H1 (cell line): ENCODE measurements at regions of chr5 and their contacts with region 1.

Region 1: GRCh38 chr5:10695055-10695649 is 65.9 kb downstream of the DAP start:
- DNase-seq: peak in 1 of 2 experiments; percentile 76
- H3K4me3 ChIP-seq: no peak overlapping the region
- H3K27ac ChIP-seq: no peak overlapping the region
- H3K4me1 ChIP-seq: peaks cover 0 to 3% (median 2%) of the 10 kb centered on the region in 4 experiments; a peak in 3 of 7 replicates
- H3K27me3 ChIP-seq: no peaks in the 10 kb centered on the region
- CTCF ChIP-seq: peak; percentile 85 to 88 (median 88)
- EP300 ChIP-seq: no peak
- POLR2A ChIP-seq: no peak
- RAD21 ChIP-seq: peak; percentile 92 to 94

Region 2: GRCh38 chr5:10756549-10756948 is 61.4 kb after region 1 on chr5:
- CTCF ChIA-PET with region 1: interaction called, 11 read pairs
- POLR2A ChIA-PET with region 1: no interaction called
- DNase-seq: no peak
- H3K4me3 ChIP-seq: no peak overlapping the region
- H3K27ac ChIP-seq: no peak overlapping the region
- H3K4me1 ChIP-seq: peaks cover 2 to 5% (median 3%) of the 10 kb centered on the region in 4 experiments; a peak in 4 of 7 replicates
- H3K27me3 ChIP-seq: no peaks in the 10 kb centered on the region
- CTCF ChIP-seq: no peak
- EP300 ChIP-seq: no peak
- POLR2A ChIP-seq: no peak
- RAD21 ChIP-seq: no peak

Region 3: GRCh38 chr5:10775646-10776045 is 80.5 kb after region 1 on chr5:
- CTCF ChIA-PET with region 1: interaction called, 11 read pairs
- POLR2A ChIA-PET with region 1: no interaction called
- DNase-seq: no peak
- H3K4me3 ChIP-seq: no peak overlapping the region
- H3K27ac ChIP-seq: no peak overlapping the region
- H3K4me1 ChIP-seq: no peaks in the 10 kb centered on the region
- H3K27me3 ChIP-seq: no peaks in the 10 kb centered on the region; a peak in 1 of 7 replicates
- CTCF ChIP-seq: peak; percentile 47 to 51 (median 49)
- EP300 ChIP-seq: no peak
- POLR2A ChIP-seq: no peak
- RAD21 ChIP-seq: peak in 1 of 2 experiments; percentile 51; a peak in 2 of 4 replicates